ENCODE measurements at regions of chr1 and their contacts with region 1.

Region 1: GRCh38 chr1:31955917-31956736 is 18.0 kb upstream of the PTP4A2 start:
- ATAC-seq: peak; percentile 86 to 97 (median 87)
- H3K4me3 ChIP-seq: no peak overlapping the region
- H3K27ac ChIP-seq: peak overlapping the region; percentile 68 to 89
- H3K4me1 ChIP-seq: peaks cover 25 to 33% of the 10 kb centered on the region in 2 donors

Region 2: GRCh38 chr1:31815752-31816500 is 140.2 kb before region 1 on chr1 and contains the start of gene SPOCD1:
- in situ Hi-C with region 1: loop called in 2 of 9 experiments (anchors 10 to 25 kb)
- ATAC-seq: peak; percentile 13 to 92 (median 36)
- H3K4me3 ChIP-seq: no peak within 1 kb of the TSS
- H3K27ac ChIP-seq: no peak within 1 kb of the TSS
- H3K4me1 ChIP-seq: peaks cover 2 to 10% of the 10 kb centered on the region in 2 donors
- total RNA-seq, gene SPOCD1: 0.05 to 4.0 (median 0.65) TPM

Measured in motor neuron (in vitro differentiated cells).